ENCODE measurements at regions of chr7 and their contacts with region 1.

Region 1: DNA sequence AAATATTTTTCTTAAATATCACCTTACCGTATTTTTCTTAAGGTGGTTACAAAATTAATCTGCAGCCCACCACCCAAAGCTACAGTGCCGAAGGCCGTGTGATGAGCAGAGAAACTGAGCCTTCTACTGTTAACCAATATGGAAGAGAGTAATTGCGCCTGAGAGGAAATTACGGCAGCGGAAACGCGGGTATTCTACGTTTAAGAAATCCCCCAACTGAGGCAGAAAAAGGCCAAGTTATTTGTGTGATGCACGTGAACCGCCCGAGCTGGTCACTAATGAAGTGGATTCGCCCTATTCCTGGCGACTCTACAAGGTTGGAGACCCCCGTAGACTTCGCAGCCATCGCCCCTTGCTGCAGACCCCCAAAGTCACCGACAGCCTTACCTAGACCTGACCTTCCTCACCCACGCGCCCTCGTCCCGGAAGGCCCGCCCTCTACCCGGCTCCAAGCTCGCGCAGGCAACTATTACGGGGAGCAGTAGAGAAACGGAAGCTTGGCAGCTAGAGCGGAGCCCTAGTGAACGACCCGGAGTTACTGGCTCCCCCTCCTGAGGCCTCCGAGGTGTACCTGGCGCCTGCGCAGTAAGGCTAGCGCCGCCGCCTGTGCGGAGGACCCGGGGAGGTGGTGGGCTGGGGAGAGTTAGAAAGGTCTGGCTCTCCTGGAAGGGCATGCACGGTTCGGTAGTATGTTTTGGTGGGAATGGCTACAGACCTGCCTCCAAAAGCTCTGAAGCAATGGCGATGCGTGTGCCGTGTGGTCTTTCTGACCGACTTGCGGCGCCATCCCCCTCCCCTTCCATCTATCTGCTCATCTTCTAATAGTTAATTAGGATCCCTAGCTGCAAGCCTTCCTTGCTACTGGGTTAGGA is at the start of gene MRPS33:
- DNase-seq: peak; percentile 90
- H3K4me3 ChIP-seq: peak within 1 kb of the TSS; percentile 88
- H3K27ac ChIP-seq: peak within 1 kb of the TSS; percentile 77
- H3K27me3 ChIP-seq: no peaks in the 10 kb centered on the region
- CTCF ChIP-seq: peak; percentile 35
- polyA plus RNA-seq, gene MRPS33: 80.1 and 99.2 TPM in 2 replicates

Region 2: DNA sequence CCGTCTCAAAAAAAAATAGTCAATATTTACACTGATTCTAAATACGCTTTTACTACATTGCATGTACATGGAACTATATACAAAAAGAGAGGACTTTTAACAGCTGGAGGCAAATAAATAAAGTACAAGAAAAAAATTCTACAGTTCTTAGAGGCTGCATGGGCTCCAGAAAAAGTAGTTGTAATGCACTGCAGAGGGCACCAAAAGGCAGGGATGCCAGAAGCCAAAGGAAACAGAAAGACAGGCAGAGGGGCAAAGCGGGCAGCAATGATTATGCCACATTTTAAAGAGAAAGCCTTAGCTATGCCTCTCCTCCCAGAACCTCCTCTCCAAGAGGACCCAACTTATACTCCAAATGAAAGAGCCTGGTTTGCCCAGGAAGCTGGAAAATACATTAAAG is 353.6 kb before region 1 on chr7:
- CTCF ChIA-PET with region 1: interaction called, 10 read pairs
- POLR2A ChIA-PET with region 1: no interaction called
- DNase-seq: no peak
- H3K4me3 ChIP-seq: no peak overlapping the region
- H3K27ac ChIP-seq: no peak overlapping the region
- H3K27me3 ChIP-seq: no peaks in the 10 kb centered on the region
- CTCF ChIP-seq: peak; percentile 37

Region 3: GRCh38 chr7:141045842-141046630 is 31.3 kb after region 1 on chr7:
- CTCF ChIA-PET with region 1: no interaction called
- POLR2A ChIA-PET with region 1: no interaction called
- DNase-seq: no peak
- H3K4me3 ChIP-seq: no peak overlapping the region
- H3K27ac ChIP-seq: no peak overlapping the region
- H3K27me3 ChIP-seq: no peaks in the 10 kb centered on the region
- CTCF ChIP-seq: no peak

Region 4: DNA sequence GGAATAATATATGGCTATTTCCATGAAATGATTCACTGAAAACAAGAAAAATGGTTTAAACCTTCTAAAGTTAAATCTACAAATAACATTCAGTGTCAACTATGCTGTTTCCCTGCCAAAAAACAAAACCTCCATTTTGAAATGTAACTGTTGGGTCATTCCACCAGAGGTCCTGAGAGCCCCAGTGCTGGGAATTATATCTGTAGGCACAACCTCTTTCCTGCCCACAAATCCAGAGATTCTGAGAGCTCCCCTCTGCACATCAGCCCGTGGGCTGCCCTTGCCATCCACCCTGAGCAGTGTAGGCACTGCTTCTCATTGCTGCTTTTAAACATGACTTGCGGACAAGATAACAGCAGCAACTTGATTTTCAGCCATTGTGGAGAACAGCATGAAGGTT is 257.7 kb after region 1 on chr7:
- CTCF ChIA-PET with region 1: no interaction called
- POLR2A ChIA-PET with region 1: no interaction called
- DNase-seq: no peak
- H3K4me3 ChIP-seq: no peak overlapping the region
- H3K27ac ChIP-seq: no peak overlapping the region
- H3K27me3 ChIP-seq: no peaks in the 10 kb centered on the region
- CTCF ChIP-seq: no peak

Measured in AG04450 (cell line).